ENCODE measurements at regions of chr10 and their contacts with region 1.

Region 1: DNA sequence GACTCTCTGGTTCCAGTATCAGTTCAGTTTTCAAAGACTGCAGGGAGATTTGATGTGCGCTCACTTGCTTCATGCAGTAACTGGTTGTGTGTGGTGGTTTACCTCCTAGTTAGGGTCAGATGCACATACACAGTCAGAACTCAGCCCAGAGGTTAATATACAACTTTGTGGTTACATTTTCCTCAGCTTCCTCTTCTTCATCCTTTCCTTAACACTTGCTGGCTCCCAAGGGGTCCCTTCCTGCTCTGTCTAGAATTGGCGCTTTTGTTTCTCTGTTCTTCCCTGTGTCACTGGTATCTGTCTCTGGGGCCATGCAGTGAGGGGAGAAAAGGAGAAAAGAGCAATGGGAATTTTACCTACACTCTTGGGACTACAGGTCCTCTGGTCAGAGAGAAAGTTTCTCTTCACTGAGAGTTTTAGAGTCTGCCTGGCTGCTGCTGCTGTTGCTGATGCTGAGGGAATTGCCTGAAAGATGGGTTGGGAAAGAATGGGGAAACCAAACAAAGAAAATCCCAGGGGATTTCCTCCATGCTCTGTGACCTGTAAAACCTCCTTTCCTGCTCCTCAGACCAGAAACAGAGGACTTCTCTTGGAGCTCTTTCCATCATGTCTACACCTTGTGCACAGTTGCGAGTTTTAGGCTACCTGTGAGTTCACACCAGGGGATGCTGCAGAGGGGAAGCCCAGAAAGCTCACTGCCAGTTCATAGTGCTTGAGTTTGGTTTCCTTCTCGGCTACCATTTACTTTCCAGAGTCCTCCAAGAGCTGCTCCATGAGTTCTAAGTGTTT is 74.6 kb downstream of the WDFY4 start:
- DNase-seq: no peak

Region 2: DNA sequence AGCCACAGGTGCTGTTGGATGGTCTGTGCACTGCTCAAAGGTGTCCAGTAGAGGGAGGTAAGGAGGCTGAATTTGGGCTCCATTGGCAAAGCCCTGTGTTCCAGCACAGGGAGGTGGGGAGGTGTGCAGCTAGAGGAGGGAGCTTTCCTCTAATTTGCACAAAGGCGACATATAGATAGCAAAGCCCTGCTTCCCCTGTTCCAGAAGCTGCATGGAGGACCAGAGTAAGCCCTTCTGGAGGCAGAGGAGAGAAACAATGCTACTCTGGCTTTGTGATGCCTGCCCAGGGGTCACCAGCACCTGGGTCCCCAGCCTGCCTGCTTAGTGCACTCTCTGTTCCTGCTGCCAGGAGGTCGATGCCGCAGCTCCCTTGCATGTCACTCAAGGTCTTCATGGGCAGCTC is 151.0 kb before region 1 on chr10:
- intact Hi-C with region 1: no loop called
- DNase-seq: no peak

Region 3: GRCh38 chr10:48725686-48726085 is 33.6 kb before region 1 on chr10:
- intact Hi-C with region 1: loop called in 1 of 2 experiments (anchors 2 kb)
- DNase-seq: no peak

Region 4: GRCh38 chr10:48838834-48839233 is 79.5 kb after region 1 on chr10:
- intact Hi-C with region 1: no loop called
- DNase-seq: no peak

Measured in posterior vena cava (tissue), 2 donors.